Mammary epithelial cell (primary cell): ENCODE measurements at regions of chr16 and their contacts with region 1.

Region 1: GRCh38 chr16:14315683-14316320 is 244.7 kb downstream of the MRTFB start:
- DNase-seq: no peak
- H3K4me3 ChIP-seq: no peak overlapping the region
- H3K27ac ChIP-seq: no peak overlapping the region
- H3K4me1 ChIP-seq: peaks cover 4% of the 10 kb centered on the region
- H3K27me3 ChIP-seq: no peaks in the 10 kb centered on the region
- CTCF ChIP-seq: no peak

Region 2: DNA sequence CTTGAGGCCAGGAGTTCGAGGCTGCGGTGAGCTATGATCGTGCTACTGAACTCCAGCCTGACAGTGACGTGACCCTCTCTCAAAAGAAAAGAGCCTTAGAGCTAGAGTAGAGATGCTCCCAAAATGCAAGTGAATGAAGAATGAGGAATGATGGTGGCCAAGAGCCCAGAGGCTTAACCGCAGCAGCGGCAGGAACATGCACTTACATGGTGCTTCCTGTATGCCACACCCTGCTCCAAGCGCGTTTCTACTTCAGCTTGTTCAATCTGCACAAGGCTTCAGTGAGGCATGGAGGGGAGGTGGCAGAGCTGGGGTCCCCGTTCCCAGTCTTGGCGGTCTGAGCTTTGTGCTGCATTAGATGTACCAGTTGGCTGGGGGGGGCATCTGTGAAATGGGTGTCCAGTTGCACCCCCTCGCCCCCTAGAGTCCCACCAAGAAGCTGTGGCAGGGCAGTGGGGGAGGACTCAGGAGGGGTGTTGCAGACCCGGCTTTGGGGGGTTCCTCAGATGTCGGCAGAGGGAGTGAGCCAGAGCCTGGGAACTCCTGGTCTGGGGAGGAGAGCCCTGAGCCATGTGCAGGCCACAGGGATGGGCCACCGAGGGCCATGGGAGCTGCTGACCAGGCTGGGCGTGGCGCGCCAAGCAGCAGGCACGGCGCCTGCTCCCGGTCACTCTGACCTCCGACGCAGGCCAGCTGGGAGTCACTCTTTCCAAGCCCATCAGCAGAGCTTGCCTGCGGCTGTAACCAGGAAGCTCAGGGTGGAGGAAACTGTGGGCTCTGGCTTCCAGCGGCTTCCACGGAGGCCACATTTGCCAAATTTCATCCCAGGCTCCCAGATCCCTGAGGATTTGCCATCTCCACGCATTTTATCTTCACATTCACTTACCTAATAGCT is 54.2 kb after region 1 on chr16:
- CTCF ChIA-PET with region 1: no interaction called
- dilution Hi-C with region 1: no loop called
- in situ Hi-C with region 1: no loop called
- intact Hi-C with region 1: no loop called
- DNase-seq: peak; percentile 35
- H3K4me3 ChIP-seq: no peak overlapping the region
- H3K27ac ChIP-seq: no peak overlapping the region
- H3K4me1 ChIP-seq: peaks cover 16% of the 10 kb centered on the region
- H3K27me3 ChIP-seq: no peaks in the 10 kb centered on the region
- CTCF ChIP-seq: peak in 1 of 2 donors; percentile 3

Region 3: DNA sequence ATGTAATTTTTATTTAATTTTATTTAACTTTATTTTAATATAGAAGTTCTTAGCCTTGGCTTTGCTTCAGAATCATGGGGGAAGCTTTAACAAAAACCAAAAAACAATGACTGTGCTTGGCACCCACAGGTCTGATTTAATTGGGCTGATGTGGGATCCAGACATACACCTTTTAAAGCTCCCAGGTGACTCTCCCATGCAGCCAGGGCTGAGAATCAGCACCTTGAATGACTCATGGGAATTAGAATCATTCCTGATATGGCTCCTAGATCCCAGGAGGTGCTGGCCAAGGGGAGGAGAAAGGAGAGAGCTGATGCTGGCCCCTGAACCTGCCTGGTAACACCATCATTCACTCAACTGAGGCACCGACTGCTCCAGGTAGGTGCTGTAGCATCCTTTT is 73.6 kb after region 1 on chr16:
- CTCF ChIA-PET with region 1: no interaction called
- dilution Hi-C with region 1: loop called (anchors 5 kb)
- in situ Hi-C with region 1: no loop called
- intact Hi-C with region 1: no loop called
- DNase-seq: peak; percentile 60
- H3K4me3 ChIP-seq: no peak overlapping the region
- H3K27ac ChIP-seq: no peak overlapping the region
- H3K4me1 ChIP-seq: no peaks in the 10 kb centered on the region
- H3K27me3 ChIP-seq: no peaks in the 10 kb centered on the region
- CTCF ChIP-seq: no peak

Region 4: GRCh38 chr16:14418795-14419225 is 103.0 kb after region 1 on chr16:
- CTCF ChIA-PET with region 1: no interaction called
- dilution Hi-C with region 1: no loop called
- in situ Hi-C with region 1: no loop called
- intact Hi-C with region 1: no loop called
- DNase-seq: no peak
- H3K4me3 ChIP-seq: no peak overlapping the region
- H3K27ac ChIP-seq: no peak overlapping the region
- H3K4me1 ChIP-seq: no peaks in the 10 kb centered on the region
- H3K27me3 ChIP-seq: no peaks in the 10 kb centered on the region
- CTCF ChIP-seq: no peak